ENCODE measurements at regions of chr22 and their contacts with region 1.

Region 1: DNA sequence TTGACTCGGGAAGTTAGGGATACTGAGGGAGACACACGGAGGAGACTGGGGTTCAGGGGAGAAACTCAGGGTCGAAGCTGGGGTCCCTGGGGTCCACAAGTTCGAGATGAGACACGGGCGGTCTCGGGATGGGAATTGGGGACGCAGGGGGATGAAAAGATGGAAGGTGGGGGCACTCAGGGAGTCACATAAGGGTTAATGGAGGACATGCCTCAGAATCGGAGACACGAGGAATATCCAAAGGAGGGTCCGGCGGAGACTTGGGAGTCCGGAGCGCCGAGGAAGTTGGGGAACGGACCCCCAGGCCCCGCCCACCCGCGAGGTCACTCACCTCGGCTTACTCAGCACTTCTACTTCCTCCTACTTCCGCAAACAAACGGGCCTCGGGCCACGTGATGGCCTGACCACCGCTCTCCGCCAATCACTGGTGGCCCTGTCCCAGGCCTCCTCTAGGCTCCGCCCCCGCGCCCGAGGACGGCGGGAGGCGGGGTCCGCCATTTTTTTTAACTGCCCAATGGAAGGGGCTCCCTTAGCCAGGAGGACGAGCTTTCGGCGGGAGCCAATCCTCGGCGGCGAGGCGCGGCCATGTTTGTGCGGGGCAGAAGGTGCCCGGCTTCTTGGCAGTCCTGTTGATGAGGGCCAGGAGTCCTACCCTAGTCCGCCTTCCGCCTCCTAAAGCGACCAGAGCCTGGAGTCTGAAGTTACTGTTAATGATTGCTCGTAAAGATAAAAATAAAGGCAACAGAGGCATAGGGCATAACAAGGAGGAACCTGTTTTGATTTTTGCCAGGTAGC is at the start of gene PLA2G6:
- DNase-seq: peak; percentile 99
- H3K4me3 Mint-ChIP-seq: peak within 1 kb of the TSS; percentile 94
- H3K27ac Mint-ChIP-seq: peak within 1 kb of the TSS; percentile 96
- H3K4me1 Mint-ChIP-seq: peaks cover 43% of the 10 kb centered on the region
- H3K27me3 Mint-ChIP-seq: no peaks in the 10 kb centered on the region
- total RNA-seq, gene PLA2G6: 80.2 to 85.3 TPM

Region 2: DNA sequence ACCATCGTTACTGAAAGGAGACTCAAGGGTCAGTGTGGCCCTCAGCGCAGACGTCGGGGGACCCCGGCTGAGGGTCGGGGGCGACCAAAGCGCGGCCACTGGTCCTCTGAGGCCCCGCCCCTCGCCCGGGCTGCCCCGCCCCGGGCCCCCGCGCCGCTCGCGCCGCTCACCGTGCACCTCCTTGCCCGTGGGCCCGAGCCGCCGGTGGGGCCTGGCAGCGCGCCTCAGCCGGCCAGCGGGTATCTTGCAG is 338.0 kb before region 1 on chr22:
- CTCF ChIA-PET with region 1: no interaction called
- intact Hi-C with region 1: loop called (anchors 5 kb)
- DNase-seq: no peak
- H3K4me3 Mint-ChIP-seq: peak overlapping the region; percentile 83
- H3K27ac Mint-ChIP-seq: no peak overlapping the region
- H3K4me1 Mint-ChIP-seq: peaks cover 30% of the 10 kb centered on the region
- H3K27me3 Mint-ChIP-seq: no peaks in the 10 kb centered on the region

Region 3: GRCh38 chr22:38201710-38202436 is 20.2 kb after region 1 on chr22 and contains the start of gene MAFF:
- CTCF ChIA-PET with region 1: interaction called, 3 read pairs
- intact Hi-C with region 1: loop called (anchors 1 kb)
- DNase-seq: peak; percentile 95
- H3K4me3 Mint-ChIP-seq: peak within 1 kb of the TSS; percentile 79
- H3K27ac Mint-ChIP-seq: peak within 1 kb of the TSS; percentile 77
- H3K4me1 Mint-ChIP-seq: peaks cover 28% of the 10 kb centered on the region
- H3K27me3 Mint-ChIP-seq: no peaks in the 10 kb centered on the region
- total RNA-seq, gene MAFF: 2.7 to 2.8 TPM